Activated naive CD4-positive, alpha-beta T cell treated with anti-CD3 and anti-CD28 coated beads for 36 hours (primary cell): ENCODE measurements at regions of chr5 and their contacts with region 1.

Region 1: GRCh38 chr5:149517461-149518122 is 33.6 kb downstream of the CSNK1A1 start:
- DNase-seq: no peak
- H3K4me3 Mint-ChIP-seq: no peak overlapping the region
- H3K27ac Mint-ChIP-seq: no peak overlapping the region
- H3K4me1 Mint-ChIP-seq: peaks cover 64% of the 10 kb centered on the region
- H3K27me3 Mint-ChIP-seq: no peaks in the 10 kb centered on the region

Region 2: GRCh38 chr5:149442563-149443182 is 74.9 kb before region 1 on chr5:
- CTCF ChIA-PET with region 1: interaction called, 10 read pairs
- intact Hi-C with region 1: no loop called
- DNase-seq: peak; percentile 82
- H3K4me3 Mint-ChIP-seq: no peak overlapping the region
- H3K27ac Mint-ChIP-seq: no peak overlapping the region
- H3K4me1 Mint-ChIP-seq: peaks cover 18% of the 10 kb centered on the region
- H3K27me3 Mint-ChIP-seq: no peaks in the 10 kb centered on the region

Region 3: GRCh38 chr5:149532413-149532812 is 14.8 kb after region 1 on chr5:
- CTCF ChIA-PET with region 1: interaction called, 4 read pairs
- intact Hi-C with region 1: loop called (anchors 2 kb)
- DNase-seq: no peak
- H3K4me3 Mint-ChIP-seq: no peak overlapping the region
- H3K27ac Mint-ChIP-seq: no peak overlapping the region
- H3K4me1 Mint-ChIP-seq: peaks cover 76% of the 10 kb centered on the region
- H3K27me3 Mint-ChIP-seq: no peaks in the 10 kb centered on the region

Region 4: GRCh38 chr5:149799119-149799623 is 281.6 kb after region 1 on chr5:
- CTCF ChIA-PET with region 1: no interaction called
- intact Hi-C with region 1: no loop called
- DNase-seq: no peak
- H3K4me3 Mint-ChIP-seq: no peak overlapping the region
- H3K27ac Mint-ChIP-seq: no peak overlapping the region
- H3K4me1 Mint-ChIP-seq: peaks cover 3% of the 10 kb centered on the region
- H3K27me3 Mint-ChIP-seq: no peaks in the 10 kb centered on the region